Panc1 (cell line): ENCODE measurements at regions of chr9 and their contacts with region 1.

Region 1: DNA sequence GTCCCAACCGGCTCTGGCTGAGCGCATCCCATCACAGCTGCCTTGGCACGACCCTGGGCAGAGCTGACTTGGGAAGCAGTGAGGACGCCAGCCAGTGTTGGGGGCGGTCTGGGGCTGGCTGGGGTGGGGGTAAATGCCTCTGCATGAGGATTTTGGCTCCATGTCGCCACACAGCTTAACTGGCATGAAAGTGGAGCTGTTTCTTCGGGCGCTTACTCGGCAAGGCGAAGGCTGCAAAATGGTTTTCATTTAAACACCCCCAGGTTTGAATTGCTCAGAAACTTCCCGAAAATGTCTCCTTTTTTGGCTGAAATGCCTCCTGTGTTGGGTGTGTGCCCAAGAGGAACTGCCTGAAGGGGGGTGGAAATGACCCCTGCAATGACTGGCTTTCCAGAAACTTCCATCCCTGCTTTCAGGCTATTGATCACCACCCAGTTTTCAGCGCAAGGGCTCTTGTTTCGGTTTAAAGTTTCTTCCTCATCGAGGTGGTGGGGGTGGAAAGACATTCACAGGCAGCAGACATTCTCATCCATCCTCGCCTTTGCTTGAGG is 38.3 kb downstream of the PTGES start:
- DNase-seq: no peak
- ATAC-seq: no peak
- H3K4me3 ChIP-seq: no peak overlapping the region
- H3K27ac ChIP-seq: no peak overlapping the region
- H3K4me1 ChIP-seq: peaks cover 7% of the 10 kb centered on the region
- H3K27me3 ChIP-seq: no peaks in the 10 kb centered on the region
- CTCF ChIP-seq: no peak

Region 2: GRCh38 chr9:129641746-129642513 is 72.7 kb before region 1 on chr9 and contains the start of gene ASB6:
- CTCF ChIA-PET with region 1: no interaction called
- POLR2A ChIA-PET with region 1: no interaction called
- in situ Hi-C with region 1: no loop called
- intact Hi-C with region 1: loop called (anchors 5 kb)
- DNase-seq: peak; percentile 58
- ATAC-seq: peak; percentile 94
- H3K4me3 ChIP-seq: peak within 1 kb of the TSS; percentile 80 to 84
- H3K27ac ChIP-seq: peak within 1 kb of the TSS; percentile 70
- H3K4me1 ChIP-seq: no peaks in the 10 kb centered on the region
- H3K27me3 ChIP-seq: no peaks in the 10 kb centered on the region
- CTCF ChIP-seq: peak; percentile 98
- total RNA-seq, gene ASB6: 14.3 TPM

Region 3: DNA sequence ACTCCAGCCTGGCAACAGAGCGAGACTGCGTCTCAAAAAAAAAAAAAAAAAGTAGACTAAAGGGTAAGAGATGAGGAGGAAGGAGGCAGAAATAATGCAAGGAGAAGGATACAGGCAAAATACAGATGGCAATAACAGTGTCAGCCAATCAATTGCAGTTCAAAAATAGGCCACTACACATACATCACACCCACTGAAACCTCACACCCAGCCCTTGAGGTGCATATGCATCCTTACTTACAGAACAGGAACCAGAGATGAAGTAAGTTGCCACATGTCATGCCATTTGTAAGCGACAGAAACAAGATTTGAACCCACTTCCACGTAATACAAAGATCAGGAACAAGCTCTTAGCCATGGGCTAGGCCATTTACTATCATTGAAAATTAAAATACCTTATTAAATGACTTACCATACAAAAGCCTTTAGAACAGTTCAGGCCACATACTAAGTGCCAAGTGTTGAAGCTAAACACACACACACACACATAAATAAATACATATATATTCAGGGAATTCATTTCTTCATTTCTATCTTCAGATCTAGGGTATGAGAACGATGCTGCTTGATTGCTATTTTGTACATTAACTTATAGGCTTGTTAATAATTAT is 230.0 kb after region 1 on chr9:
- CTCF ChIA-PET with region 1: no interaction called
- POLR2A ChIA-PET with region 1: no interaction called
- in situ Hi-C with region 1: no loop called
- intact Hi-C with region 1: no loop called
- DNase-seq: no peak
- ATAC-seq: no peak
- H3K4me3 ChIP-seq: no peak overlapping the region
- H3K27ac ChIP-seq: no peak overlapping the region
- H3K4me1 ChIP-seq: no peaks in the 10 kb centered on the region
- H3K27me3 ChIP-seq: no peaks in the 10 kb centered on the region
- CTCF ChIP-seq: no peak

Region 4: DNA sequence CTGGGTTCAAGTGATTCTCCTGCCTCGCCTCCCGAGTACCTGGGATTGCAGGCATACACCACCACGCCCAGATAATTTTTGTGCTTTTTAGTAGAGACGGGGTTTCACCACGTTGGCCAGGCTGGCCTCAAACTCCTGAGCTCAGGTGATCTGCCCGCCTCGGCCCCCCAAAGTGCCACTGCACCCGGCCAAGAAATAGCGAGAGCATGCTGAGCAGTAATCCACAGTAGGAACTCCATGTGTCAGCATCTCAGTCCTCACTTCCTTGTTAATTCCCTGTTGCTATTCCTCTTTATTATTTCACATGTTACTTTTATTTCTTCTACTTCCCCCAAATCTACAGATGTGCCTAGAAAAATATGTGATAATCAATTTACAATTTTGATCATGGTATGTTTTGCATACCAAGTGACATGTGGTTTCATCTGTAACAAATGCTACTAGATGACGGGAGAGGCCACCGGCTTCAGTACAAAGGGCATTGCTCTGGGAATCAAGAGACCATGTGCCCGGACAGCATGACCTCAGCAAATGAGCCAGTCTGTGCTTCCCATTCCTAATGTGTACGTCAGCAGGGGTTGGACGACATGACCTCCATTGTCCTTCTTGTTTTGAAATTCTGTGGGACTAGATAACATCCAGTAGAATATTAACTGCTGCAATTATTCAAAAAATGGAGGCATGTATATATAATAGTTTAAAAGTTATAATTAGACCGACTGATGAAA is 266.8 kb after region 1 on chr9:
- CTCF ChIA-PET with region 1: no interaction called
- POLR2A ChIA-PET with region 1: no interaction called
- in situ Hi-C with region 1: no loop called
- intact Hi-C with region 1: no loop called
- DNase-seq: no peak
- ATAC-seq: no peak
- H3K4me3 ChIP-seq: no peak overlapping the region
- H3K27ac ChIP-seq: no peak overlapping the region
- H3K4me1 ChIP-seq: no peaks in the 10 kb centered on the region
- H3K27me3 ChIP-seq: no peaks in the 10 kb centered on the region
- CTCF ChIP-seq: no peak